ENCODE measurements at regions of chr5 and their contacts with region 1.

Region 1: GRCh38 chr5:127290019-127290945 is at the start of gene MEGF10:
- DNase-seq: peak; percentile 17
- ATAC-seq: peak; percentile 74
- H3K4me3 ChIP-seq: peak within 1 kb of the TSS; percentile 12; the same call in 1 of the 2 replicates
- H3K27ac ChIP-seq: no peak within 1 kb of the TSS
- H3K4me1 ChIP-seq: no peaks in the 10 kb centered on the region
- H3K27me3 ChIP-seq: peaks cover 27% of the 10 kb centered on the region
- CTCF ChIP-seq: peak; percentile 69
- POLR2A ChIP-seq: no peak
- RAD21 ChIP-seq: peak; percentile 77
- total RNA-seq, gene MEGF10: not detected in 2 replicates

Region 2: GRCh38 chr5:126837906-126838539 is 452.3 kb before region 1 on chr5:
- CTCF ChIA-PET with region 1: no interaction called
- POLR2A ChIA-PET with region 1: no interaction called
- dilution Hi-C with region 1: no loop called
- in situ Hi-C with region 1: no loop called
- intact Hi-C with region 1: loop called (anchors 5 kb)
- DNase-seq: peak; percentile 53
- ATAC-seq: peak; percentile 61
- H3K4me3 ChIP-seq: no peak overlapping the region
- H3K27ac ChIP-seq: no peak overlapping the region
- H3K4me1 ChIP-seq: no peaks in the 10 kb centered on the region
- H3K27me3 ChIP-seq: no peaks in the 10 kb centered on the region
- CTCF ChIP-seq: peak; percentile 68
- POLR2A ChIP-seq: no peak
- RAD21 ChIP-seq: peak; percentile 69

Region 3: GRCh38 chr5:127163750-127164149 is 126.5 kb before region 1 on chr5:
- CTCF ChIA-PET with region 1: no interaction called
- POLR2A ChIA-PET with region 1: no interaction called
- dilution Hi-C with region 1: no loop called
- in situ Hi-C with region 1: no loop called
- intact Hi-C with region 1: no loop called
- DNase-seq: no peak
- ATAC-seq: no peak
- H3K4me3 ChIP-seq: no peak overlapping the region
- H3K27ac ChIP-seq: no peak overlapping the region
- H3K4me1 ChIP-seq: no peaks in the 10 kb centered on the region
- H3K27me3 ChIP-seq: no peaks in the 10 kb centered on the region
- CTCF ChIP-seq: no peak
- POLR2A ChIP-seq: no peak
- RAD21 ChIP-seq: no peak

Region 4: GRCh38 chr5:127441799-127442484 is 151.7 kb after region 1 on chr5:
- CTCF ChIA-PET with region 1: no interaction called
- POLR2A ChIA-PET with region 1: no interaction called
- dilution Hi-C with region 1: no loop called
- in situ Hi-C with region 1: no loop called
- intact Hi-C with region 1: loop called (anchors 1 kb)
- DNase-seq: peak; percentile 2
- ATAC-seq: no peak
- H3K4me3 ChIP-seq: no peak overlapping the region
- H3K27ac ChIP-seq: no peak overlapping the region
- H3K4me1 ChIP-seq: no peaks in the 10 kb centered on the region
- H3K27me3 ChIP-seq: peaks cover 7% of the 10 kb centered on the region
- CTCF ChIP-seq: peak; percentile 42
- POLR2A ChIP-seq: no peak
- RAD21 ChIP-seq: peak; percentile 36; the same call in 1 of the 2 replicates

Region 5: GRCh38 chr5:127486471-127486870 is 196.2 kb after region 1 on chr5:
- CTCF ChIA-PET with region 1: no interaction called
- POLR2A ChIA-PET with region 1: no interaction called
- dilution Hi-C with region 1: no loop called
- in situ Hi-C with region 1: loop called (anchors 10 kb)
- intact Hi-C with region 1: no loop called
- DNase-seq: no peak
- ATAC-seq: no peak
- H3K4me3 ChIP-seq: no peak overlapping the region
- H3K27ac ChIP-seq: no peak overlapping the region
- H3K4me1 ChIP-seq: no peaks in the 10 kb centered on the region
- H3K27me3 ChIP-seq: peaks cover 10% of the 10 kb centered on the region
- CTCF ChIP-seq: no peak
- POLR2A ChIP-seq: no peak
- RAD21 ChIP-seq: no peak

Region 6: GRCh38 chr5:127492854-127493738 is 202.8 kb after region 1 on chr5:
- CTCF ChIA-PET with region 1: interaction called, 8 read pairs
- POLR2A ChIA-PET with region 1: no interaction called
- dilution Hi-C with region 1: no loop called
- in situ Hi-C with region 1: loop called (anchors 10 kb)
- intact Hi-C with region 1: loop called (anchors 1 kb)
- DNase-seq: peak; percentile 36
- ATAC-seq: peak; percentile 79
- H3K4me3 ChIP-seq: no peak overlapping the region
- H3K27ac ChIP-seq: no peak overlapping the region
- H3K4me1 ChIP-seq: no peaks in the 10 kb centered on the region
- H3K27me3 ChIP-seq: peaks cover 13% of the 10 kb centered on the region
- CTCF ChIP-seq: peak; percentile 70
- POLR2A ChIP-seq: no peak
- RAD21 ChIP-seq: peak; percentile 11; the same call in 1 of the 2 replicates